ENCODE measurements at regions of chr11 and their contacts with region 1.

Region 1: DNA sequence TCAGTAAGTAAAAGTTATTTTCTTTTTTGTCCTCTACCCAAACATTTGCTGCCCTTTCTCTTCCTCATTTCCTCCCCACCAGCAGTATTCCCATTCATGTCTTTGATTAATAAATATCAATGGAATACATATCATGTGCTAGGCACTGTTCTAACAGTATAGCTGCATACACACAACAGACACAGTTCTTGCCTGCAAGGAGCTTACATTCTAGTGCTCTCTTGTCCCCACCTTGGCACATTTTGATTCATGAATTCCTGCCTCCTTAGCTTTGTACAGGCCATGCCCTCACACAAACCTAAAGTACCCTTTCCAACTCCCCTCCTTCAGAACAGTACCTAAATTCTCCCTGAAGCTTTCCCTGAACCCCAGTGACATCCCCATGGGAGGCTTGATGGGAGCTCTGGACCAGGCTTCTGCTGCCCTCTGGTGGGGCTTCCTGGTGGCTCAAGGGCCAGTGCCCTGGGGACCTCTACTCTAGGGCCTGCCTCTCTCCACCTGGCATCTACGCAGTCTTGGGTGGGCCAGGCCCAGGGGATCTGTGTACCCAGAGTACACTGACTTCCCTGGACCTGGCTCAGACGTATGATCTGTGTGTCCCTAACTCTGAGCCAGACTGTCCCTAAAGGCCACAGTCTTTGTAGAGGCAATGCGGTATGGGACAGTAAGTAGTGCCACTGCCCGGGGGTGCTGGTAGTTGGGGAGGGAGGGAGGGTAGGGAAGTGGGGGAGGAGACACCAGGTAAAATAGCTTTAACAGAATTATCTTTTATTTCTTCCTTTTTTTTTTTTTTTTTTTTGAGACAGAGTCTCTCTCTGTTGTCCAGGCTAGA is 14.1 kb downstream of the RPS13 start:
- DNase-seq: peak in 1 of 2 donors; percentile 68
- H3K4me3 ChIP-seq: no peak overlapping the region
- H3K27ac ChIP-seq: no peak overlapping the region
- H3K4me1 ChIP-seq: no peaks in the 10 kb centered on the region
- H3K27me3 ChIP-seq: no peaks in the 10 kb centered on the region
- CTCF ChIP-seq: peak in 2 of 3 donors; percentile 76 to 86
- POLR2A ChIP-seq: no peak

Region 2: GRCh38 chr11:16685914-16686313 is 377.5 kb before region 1 on chr11:
- intact Hi-C with region 1: no loop called
- DNase-seq: no peak
- H3K4me3 ChIP-seq: no peak overlapping the region
- H3K27ac ChIP-seq: no peak overlapping the region
- H3K4me1 ChIP-seq: no peaks in the 10 kb centered on the region
- H3K27me3 ChIP-seq: no peaks in the 10 kb centered on the region
- CTCF ChIP-seq: no peak
- POLR2A ChIP-seq: no peak

Region 3: GRCh38 chr11:16945671-16946469 is 117.5 kb before region 1 on chr11:
- intact Hi-C with region 1: loop called (anchors 10 kb)
- DNase-seq: peak; percentile 66 to 72
- H3K4me3 ChIP-seq: no peak overlapping the region
- H3K27ac ChIP-seq: peak overlapping the region; percentile 27 to 61
- H3K4me1 ChIP-seq: no peaks in the 10 kb centered on the region
- H3K27me3 ChIP-seq: no peaks in the 10 kb centered on the region
- CTCF ChIP-seq: peak; percentile 32 to 88 (median 70)
- POLR2A ChIP-seq: no peak

Region 4: DNA sequence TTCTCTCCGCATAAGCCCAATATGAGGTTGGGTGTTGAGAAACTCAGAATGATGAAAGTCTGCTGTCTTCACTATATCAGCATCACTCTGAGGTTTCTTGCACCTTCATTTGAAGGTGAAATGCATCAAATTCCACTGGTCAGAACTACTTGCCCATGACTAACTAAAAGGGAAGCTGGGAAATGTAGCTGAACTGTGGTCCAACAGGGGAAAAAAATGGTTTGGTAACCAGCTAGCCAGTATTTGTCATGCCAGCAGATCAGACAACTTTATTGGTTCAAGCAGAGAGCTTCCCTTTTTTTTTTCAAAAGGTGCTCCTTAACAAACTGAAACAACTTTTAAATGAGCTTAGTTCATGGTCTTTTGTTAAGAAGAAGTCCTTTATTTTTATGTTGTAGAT is 158.6 kb after region 1 on chr11:
- intact Hi-C with region 1: no loop called
- DNase-seq: no peak
- H3K4me3 ChIP-seq: no peak overlapping the region
- H3K27ac ChIP-seq: no peak overlapping the region
- H3K4me1 ChIP-seq: no peaks in the 10 kb centered on the region
- H3K27me3 ChIP-seq: no peaks in the 10 kb centered on the region
- CTCF ChIP-seq: no peak
- POLR2A ChIP-seq: no peak

Measured in breast epithelium (tissue), 4 donors.